Activated CD8-positive, alpha-beta T cell treated with anti-CD3 and anti-CD28 coated beads for 36 hours (primary cell): ENCODE measurements at regions of chr9 and their contacts with region 1.

Region 1: DNA sequence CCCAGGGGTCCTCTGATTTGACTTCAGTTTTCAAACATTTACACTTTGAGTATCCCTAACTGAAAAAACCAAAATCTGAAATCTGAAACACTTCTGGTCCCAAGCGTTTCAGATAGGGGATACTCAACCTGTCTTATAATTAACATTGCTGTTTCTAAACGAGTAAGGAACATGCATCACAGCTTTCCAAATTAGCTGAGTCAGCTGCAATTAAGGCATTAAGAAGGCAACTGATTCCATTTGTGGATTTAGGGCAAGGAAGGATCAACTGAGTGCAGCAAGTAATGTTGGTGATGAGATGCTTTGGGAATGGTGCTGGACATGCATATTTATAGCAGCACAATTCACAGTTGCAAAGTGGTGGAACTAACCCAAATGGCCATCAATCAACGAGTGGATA is 168.6 kb downstream of the ACER2 start:
- DNase-seq: no peak
- ATAC-seq: no peak
- H3K4me3 Mint-ChIP-seq: no peak overlapping the region
- H3K27ac Mint-ChIP-seq: no peak overlapping the region
- H3K4me1 Mint-ChIP-seq: no peaks in the 10 kb centered on the region
- H3K27me3 Mint-ChIP-seq: peaks cover 6% of the 10 kb centered on the region
- CTCF ChIP-seq: no peak

Region 2: DNA sequence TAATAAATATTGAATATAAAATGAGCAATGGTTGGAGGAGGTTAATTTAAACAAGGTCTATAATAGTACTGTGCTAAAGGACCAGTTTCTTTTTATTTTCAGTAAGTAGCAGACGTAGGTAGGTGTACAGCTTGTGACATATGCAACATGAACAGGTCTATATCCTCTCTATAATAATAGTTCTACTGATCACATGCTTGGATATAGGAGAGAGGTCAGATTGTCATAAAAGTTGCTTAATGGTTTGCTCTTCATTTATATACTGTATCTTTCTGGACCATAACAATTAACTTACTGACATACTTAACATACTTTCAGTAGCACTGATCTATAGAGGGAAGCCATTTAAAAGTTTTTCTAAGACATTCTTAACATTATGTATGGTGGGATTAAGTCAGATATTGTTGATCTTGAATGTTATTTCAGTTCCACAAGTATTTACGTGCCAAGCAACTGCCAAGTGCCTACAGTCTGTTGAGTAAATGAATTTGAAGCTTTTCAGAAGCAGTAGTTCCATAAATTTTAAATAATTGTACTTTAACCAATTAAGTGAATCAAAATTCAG is 278.9 kb before region 1 on chr9:
- CTCF ChIA-PET with region 1: no interaction called
- POLR2A ChIA-PET with region 1: no interaction called
- intact Hi-C with region 1: no loop called
- DNase-seq: no peak
- ATAC-seq: no peak
- H3K4me3 Mint-ChIP-seq: no peak overlapping the region
- H3K27ac Mint-ChIP-seq: no peak overlapping the region
- H3K4me1 Mint-ChIP-seq: peaks cover 4% of the 10 kb centered on the region
- H3K27me3 Mint-ChIP-seq: no peaks in the 10 kb centered on the region
- CTCF ChIP-seq: no peak

Region 3: GRCh38 chr9:19498015-19498414 is 79.4 kb before region 1 on chr9:
- CTCF ChIA-PET with region 1: no interaction called
- POLR2A ChIA-PET with region 1: no interaction called
- intact Hi-C with region 1: no loop called
- DNase-seq: no peak
- ATAC-seq: no peak
- H3K4me3 Mint-ChIP-seq: no peak overlapping the region
- H3K27ac Mint-ChIP-seq: no peak overlapping the region
- H3K4me1 Mint-ChIP-seq: peaks cover 11% of the 10 kb centered on the region
- H3K27me3 Mint-ChIP-seq: peaks cover 10% of the 10 kb centered on the region
- CTCF ChIP-seq: no peak

Region 4: DNA sequence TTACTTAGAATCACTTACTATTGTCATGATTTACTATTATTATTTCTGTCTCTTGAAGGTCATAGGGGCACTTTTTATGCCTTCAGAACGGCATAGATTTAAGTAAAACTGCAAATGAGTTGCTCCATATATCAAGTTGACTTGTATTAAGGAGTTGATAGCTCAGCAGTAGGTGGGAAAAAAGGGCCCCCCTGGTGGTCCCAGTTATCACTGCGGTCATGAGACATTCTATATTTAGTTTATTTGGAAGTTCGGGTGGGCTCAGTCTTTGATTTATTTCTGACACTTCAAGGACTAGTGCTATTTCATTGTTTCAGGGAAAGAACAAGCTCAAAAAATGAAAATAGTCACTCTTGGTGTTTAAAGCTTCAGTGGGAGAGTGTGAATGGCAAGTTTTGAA is 52.1 kb after region 1 on chr9:
- CTCF ChIA-PET with region 1: no interaction called
- POLR2A ChIA-PET with region 1: no interaction called
- intact Hi-C with region 1: loop called (anchors 10 kb)
- DNase-seq: peak; percentile 2
- ATAC-seq: no peak
- H3K4me3 Mint-ChIP-seq: no peak overlapping the region
- H3K27ac Mint-ChIP-seq: no peak overlapping the region
- H3K4me1 Mint-ChIP-seq: no peaks in the 10 kb centered on the region
- H3K27me3 Mint-ChIP-seq: peaks cover 4% of the 10 kb centered on the region
- CTCF ChIP-seq: no peak

Region 5: GRCh38 chr9:19641046-19641445 is 63.6 kb after region 1 on chr9:
- CTCF ChIA-PET with region 1: no interaction called
- POLR2A ChIA-PET with region 1: no interaction called
- intact Hi-C with region 1: no loop called
- DNase-seq: no peak
- ATAC-seq: no peak
- H3K4me3 Mint-ChIP-seq: no peak overlapping the region
- H3K27ac Mint-ChIP-seq: no peak overlapping the region
- H3K4me1 Mint-ChIP-seq: no peaks in the 10 kb centered on the region
- H3K27me3 Mint-ChIP-seq: peaks cover 1% of the 10 kb centered on the region
- CTCF ChIP-seq: no peak